ENCODE measurements at regions of chr19 and their contacts with region 1.

Region 1: DNA sequence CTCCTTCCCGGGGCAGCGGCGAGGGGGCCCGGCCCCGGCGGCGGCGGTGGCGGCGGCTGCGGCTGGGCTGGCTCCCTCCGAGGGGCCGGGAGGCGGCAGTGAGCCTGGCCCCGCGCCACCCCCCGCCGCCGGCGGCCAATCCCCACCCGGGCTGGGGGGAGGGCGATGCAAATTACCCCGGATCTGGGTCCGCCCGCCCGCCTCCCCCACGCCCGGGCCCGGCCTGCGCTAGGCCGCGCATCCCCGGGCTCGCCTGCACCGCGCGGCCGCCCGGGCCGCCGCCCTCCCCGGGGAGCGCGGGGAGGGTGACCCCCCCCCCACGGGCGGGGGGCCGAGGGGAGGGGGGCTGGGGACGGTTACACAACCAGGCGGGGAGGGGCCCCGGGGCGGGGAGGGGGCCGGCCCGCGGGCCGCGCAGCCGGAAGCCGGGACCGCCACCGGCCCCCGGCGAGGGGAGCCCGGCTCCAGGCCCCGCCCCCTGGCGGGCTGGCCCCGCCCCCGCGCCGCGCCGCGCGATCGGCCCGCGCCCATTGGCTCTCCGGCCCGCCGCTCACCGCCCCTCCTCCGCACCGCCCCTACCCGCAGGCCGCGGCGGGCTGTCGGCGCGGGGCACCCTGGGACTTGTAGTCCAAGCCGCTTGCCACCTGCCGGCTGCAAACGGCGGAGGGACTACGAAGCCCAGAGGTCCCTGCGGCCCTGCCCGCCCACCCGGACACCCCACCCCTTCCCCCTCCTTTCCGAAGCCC is 1.1 kb downstream of the ZBTB7A start:
- DNase-seq: peak; percentile 65
- ATAC-seq: peak; percentile 70
- H3K4me3 ChIP-seq: no peak overlapping the region
- H3K27ac ChIP-seq: peak overlapping the region; percentile 90; the same call in 1 of the 2 replicates
- H3K4me1 ChIP-seq: peaks cover 24% of the 10 kb centered on the region
- H3K27me3 ChIP-seq: no peaks in the 10 kb centered on the region; a peak in 1 of 4 replicates
- CTCF ChIP-seq: no peak
- EP300 ChIP-seq: no peak
- POLR2A ChIP-seq: peak; percentile 46
- RAD21 ChIP-seq: no peak

Region 2: GRCh38 chr19:4052050-4052999 is 13.3 kb before region 1 on chr19:
- CTCF ChIA-PET with region 1: no interaction called
- POLR2A ChIA-PET with region 1: no interaction called
- RAD21 ChIA-PET with region 1: no interaction called
- SMC1A ChIA-PET with region 1: no interaction called
- in situ Hi-C with region 1: no loop called
- intact Hi-C with region 1: no loop called
- DNase-seq: no peak
- ATAC-seq: peak; percentile 12; the same call in 2 of the 3 replicates
- H3K4me3 ChIP-seq: no peak overlapping the region
- H3K27ac ChIP-seq: no peak overlapping the region
- H3K4me1 ChIP-seq: 0 out of 2 replicates have a peak, but pooled peaks cover 2% of the 10 kb centered on the region
- H3K27me3 ChIP-seq: no peaks in the 10 kb centered on the region
- CTCF ChIP-seq: no peak
- EP300 ChIP-seq: no peak
- POLR2A ChIP-seq: no peak
- RAD21 ChIP-seq: no peak

Region 3: DNA sequence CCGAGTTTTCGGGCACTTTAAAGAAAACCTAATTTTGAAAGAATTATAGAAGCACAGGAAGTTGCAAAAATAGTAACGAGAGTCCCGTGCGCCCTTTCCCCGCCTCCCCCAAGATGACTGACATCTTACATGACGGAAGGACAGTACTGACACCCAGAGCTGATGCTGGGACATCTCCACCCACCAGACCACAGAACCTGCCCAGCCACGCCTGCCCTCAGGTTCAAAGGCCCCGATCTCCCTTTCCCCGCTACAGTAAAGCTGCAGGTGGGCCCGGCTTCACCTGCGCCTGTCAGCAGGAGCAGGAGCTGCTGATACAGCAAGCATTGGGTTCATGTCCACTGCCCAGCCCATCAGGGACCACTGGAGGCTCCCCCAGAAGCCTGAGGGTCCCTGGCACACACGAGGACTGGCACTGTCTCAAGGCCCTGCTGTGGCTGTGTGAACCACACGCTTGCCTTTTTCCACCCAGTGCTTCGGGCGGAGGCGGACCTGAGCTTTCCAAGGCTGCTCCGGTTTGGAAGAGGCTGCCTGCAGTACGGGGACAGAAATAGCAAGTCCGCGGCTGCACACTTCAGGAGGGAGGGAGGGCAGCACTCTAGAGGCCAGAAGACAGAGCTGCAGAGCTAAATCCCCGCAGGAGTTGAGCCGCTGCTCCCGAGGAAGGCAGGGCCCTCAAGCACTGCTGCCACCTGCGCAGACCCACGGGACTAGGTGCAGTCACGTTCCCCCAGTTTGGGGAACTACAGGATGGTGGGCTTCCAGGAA is 49.6 kb after region 1 on chr19:
- CTCF ChIA-PET with region 1: interaction called, 12 read pairs
- POLR2A ChIA-PET with region 1: interaction called, 5 read pairs
- RAD21 ChIA-PET with region 1: interaction called, 8 read pairs
- SMC1A ChIA-PET with region 1: interaction called, 6 read pairs
- in situ Hi-C with region 1: no loop called
- intact Hi-C with region 1: loop called (anchors 2 kb)
- DNase-seq: peak; percentile 67
- ATAC-seq: peak; percentile 96
- H3K4me3 ChIP-seq: peak overlapping the region; percentile 50
- H3K27ac ChIP-seq: peak overlapping the region; percentile 55
- H3K4me1 ChIP-seq: peaks cover 28% of the 10 kb centered on the region
- H3K27me3 ChIP-seq: no peaks in the 10 kb centered on the region
- CTCF ChIP-seq: peak in 2 of 3 experiments; percentile 2 to 33; a peak in 3 of 6 replicates
- EP300 ChIP-seq: 0 out of 4 replicates have a peak, but pooled peaks of 1 of the 2 experiments have one; percentile 51
- POLR2A ChIP-seq: no peak; the same call in 1 of the 2 replicates
- RAD21 ChIP-seq: 0 out of 2 replicates have a peak, but pooled peaks have one; percentile 2

Region 4: DNA sequence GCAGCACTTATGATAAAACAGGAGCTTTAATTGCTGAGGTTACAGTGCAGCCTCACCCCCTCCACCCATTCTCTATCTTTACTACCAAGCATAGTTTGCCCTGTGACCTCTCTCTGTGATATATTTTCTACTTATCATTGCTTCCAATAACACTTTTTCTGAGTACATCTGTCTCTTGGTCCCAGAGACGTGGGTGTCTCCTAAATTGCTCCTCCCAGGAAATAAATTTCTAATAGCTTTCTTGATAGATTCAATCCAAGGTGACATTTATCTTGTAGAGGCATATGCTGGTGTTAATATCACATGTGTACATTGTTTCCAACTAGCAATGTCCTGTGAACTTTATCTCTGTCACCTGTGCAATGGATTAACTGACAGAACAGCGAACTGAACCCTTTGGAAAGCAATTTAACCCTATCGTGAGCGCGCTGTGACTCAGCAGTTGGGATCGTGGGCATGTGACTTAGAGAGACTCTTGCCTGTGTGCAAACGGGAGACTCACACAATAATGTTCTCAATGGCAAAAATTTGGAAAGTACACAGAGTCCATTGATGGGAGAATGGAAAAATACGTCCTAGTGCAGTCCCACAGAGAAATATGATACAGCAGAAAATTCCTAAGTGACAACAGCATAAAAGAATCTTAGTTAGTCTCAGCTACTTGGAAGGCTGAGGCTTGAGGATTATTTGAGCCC is 65.3 kb after region 1 on chr19:
- CTCF ChIA-PET with region 1: no interaction called
- POLR2A ChIA-PET with region 1: no interaction called
- RAD21 ChIA-PET with region 1: no interaction called
- SMC1A ChIA-PET with region 1: no interaction called
- in situ Hi-C with region 1: no loop called
- intact Hi-C with region 1: no loop called
- DNase-seq: no peak
- ATAC-seq: no peak
- H3K4me3 ChIP-seq: no peak overlapping the region
- H3K27ac ChIP-seq: no peak overlapping the region
- H3K4me1 ChIP-seq: no peaks in the 10 kb centered on the region
- H3K27me3 ChIP-seq: no peaks in the 10 kb centered on the region
- CTCF ChIP-seq: no peak
- EP300 ChIP-seq: no peak
- POLR2A ChIP-seq: no peak
- RAD21 ChIP-seq: no peak

Region 5: GRCh38 chr19:4182084-4182810 is 116.6 kb after region 1 on chr19 and contains the starts of genes ANKRD24 and SIRT6:
- CTCF ChIA-PET with region 1: no interaction called
- POLR2A ChIA-PET with region 1: no interaction called
- RAD21 ChIA-PET with region 1: no interaction called
- SMC1A ChIA-PET with region 1: no interaction called
- in situ Hi-C with region 1: no loop called
- intact Hi-C with region 1: loop called (anchors 10 kb)
- DNase-seq: peak; percentile 81
- ATAC-seq: peak; percentile 87
- H3K4me3 ChIP-seq: peak within 1 kb of the TSS; percentile 83
- H3K27ac ChIP-seq: peak within 1 kb of the TSS; percentile 94
- H3K4me1 ChIP-seq: peaks cover 15% of the 10 kb centered on the region
- H3K27me3 ChIP-seq: no peaks in the 10 kb centered on the region
- CTCF ChIP-seq: no peak
- EP300 ChIP-seq: peak; percentile 26 to 34; a peak in 1 of 4 replicates
- POLR2A ChIP-seq: peak; percentile 88
- RAD21 ChIP-seq: no peak
- polyA plus RNA-seq, gene ANKRD24: 0.02 TPM in 1 of 2 experiments, not detected in the other
- polyA plus RNA-seq, gene SIRT6: 1.3 to 1.5 TPM

Measured in GM12878 (cell line).